Breast epithelium (tissue), 4 donors: ENCODE measurements at regions of chr19 and their contacts with region 1.

Region 1: GRCh38 chr19:39607026-39607425 is 4.7 kb downstream of the LGALS13 start:
- DNase-seq: no peak
- H3K4me3 ChIP-seq: no peak overlapping the region
- H3K27ac ChIP-seq: no peak overlapping the region
- H3K4me1 ChIP-seq: no peaks in the 10 kb centered on the region
- H3K27me3 ChIP-seq: peaks cover 0 to 3% of the 10 kb centered on the region in 2 donors
- CTCF ChIP-seq: no peak
- POLR2A ChIP-seq: no peak

Region 2: DNA sequence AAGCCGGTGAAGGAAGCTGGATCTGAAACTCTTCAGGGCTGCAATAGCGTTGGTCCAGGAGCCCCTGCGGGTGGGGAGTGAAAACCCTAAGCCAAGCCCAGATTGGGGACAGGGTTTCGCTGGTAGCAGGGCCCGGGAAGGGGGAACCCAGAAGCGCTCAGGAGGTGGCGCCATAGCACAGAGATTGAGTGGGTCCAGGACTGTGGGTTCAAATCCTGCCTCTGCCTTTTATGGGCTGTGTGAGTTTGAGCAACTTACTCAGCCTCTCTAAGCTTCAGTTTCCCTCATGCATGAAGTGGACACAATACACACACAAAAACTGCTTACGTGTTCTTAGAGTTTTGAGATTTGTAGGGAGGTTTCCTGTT is 394.7 kb before region 1 on chr19:
- intact Hi-C with region 1: no loop called
- DNase-seq: no peak
- H3K4me3 ChIP-seq: no peak overlapping the region
- H3K27ac ChIP-seq: no peak overlapping the region
- H3K4me1 ChIP-seq: no peaks in the 10 kb centered on the region
- H3K27me3 ChIP-seq: no peaks in the 10 kb centered on the region
- CTCF ChIP-seq: no peak
- POLR2A ChIP-seq: no peak

Region 3: DNA sequence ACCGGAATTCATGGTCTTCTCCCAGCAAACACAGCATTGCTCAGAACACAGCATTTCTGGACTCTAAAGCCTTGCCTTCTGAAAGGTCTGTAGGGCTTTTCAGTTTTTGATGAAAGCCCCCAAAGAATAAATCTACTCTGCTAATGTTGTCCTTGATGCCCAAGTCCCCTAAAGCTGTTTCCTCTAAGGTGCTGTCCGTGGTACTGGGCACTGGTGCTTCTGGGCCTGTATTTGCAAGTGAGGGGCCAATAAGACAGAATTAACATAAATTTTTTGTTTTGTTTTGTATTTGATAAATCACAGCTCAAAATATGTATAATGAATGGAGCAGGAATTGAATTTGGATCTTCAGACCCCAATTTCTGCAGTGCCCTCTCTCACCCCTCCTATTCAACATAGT is 16.8 kb before region 1 on chr19:
- intact Hi-C with region 1: no loop called
- DNase-seq: no peak
- H3K4me3 ChIP-seq: no peak overlapping the region
- H3K27ac ChIP-seq: no peak overlapping the region
- H3K4me1 ChIP-seq: no peaks in the 10 kb centered on the region
- H3K27me3 ChIP-seq: peaks cover 0 to under 1% of the 10 kb centered on the region in 2 donors
- CTCF ChIP-seq: no peak
- POLR2A ChIP-seq: no peak

Region 4: GRCh38 chr19:39684263-39684662 is 77.2 kb after region 1 on chr19:
- intact Hi-C with region 1: loop called (anchors 2 kb)
- DNase-seq: no peak
- H3K4me3 ChIP-seq: no peak overlapping the region
- H3K27ac ChIP-seq: no peak overlapping the region
- H3K4me1 ChIP-seq: no peaks in the 10 kb centered on the region
- H3K27me3 ChIP-seq: no peaks in the 10 kb centered on the region
- CTCF ChIP-seq: no peak
- POLR2A ChIP-seq: no peak

Region 5: DNA sequence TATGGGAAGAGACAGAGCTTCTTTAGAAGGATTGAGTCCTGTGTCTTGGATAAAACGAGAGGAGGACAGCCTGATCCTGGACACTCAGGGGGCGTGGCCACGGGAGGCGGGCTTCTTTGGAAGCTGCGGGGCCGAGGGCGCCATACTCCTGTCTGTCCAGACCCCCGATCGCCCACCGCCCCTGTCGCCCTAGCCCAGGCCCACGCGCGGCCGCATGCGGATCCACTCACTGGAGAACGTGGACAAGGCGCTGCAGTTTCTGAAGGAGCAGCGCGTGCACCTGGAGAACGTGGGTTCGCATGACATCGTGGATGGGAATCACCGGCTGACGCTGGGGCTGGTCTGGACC is 882.8 kb after region 1 on chr19:
- intact Hi-C with region 1: loop called (anchors 5 kb)
- DNase-seq: no peak
- H3K4me3 ChIP-seq: no peak overlapping the region
- H3K27ac ChIP-seq: no peak overlapping the region
- H3K4me1 ChIP-seq: no peaks in the 10 kb centered on the region
- H3K27me3 ChIP-seq: no peaks in the 10 kb centered on the region
- CTCF ChIP-seq: no peak
- POLR2A ChIP-seq: no peak